Dendritic cell treated with granulocyte-macrophage colony-stimulating factor and Interleukin-4, amounts not matched to agents 40 ng/mL and 50 ng/mL, for 4 days (primary cell): ENCODE measurements at regions of chr2 and their contacts with region 1.

Region 1: GRCh38 chr2:84495539-84496146 is 20.7 kb upstream of the DNAH6 start:
- H3K4me3 Mint-ChIP-seq: no peak overlapping the region
- H3K27ac Mint-ChIP-seq: no peak overlapping the region
- H3K4me1 Mint-ChIP-seq: no peaks in the 10 kb centered on the region
- H3K27me3 Mint-ChIP-seq: peaks cover 3% of the 10 kb centered on the region

Region 2: DNA sequence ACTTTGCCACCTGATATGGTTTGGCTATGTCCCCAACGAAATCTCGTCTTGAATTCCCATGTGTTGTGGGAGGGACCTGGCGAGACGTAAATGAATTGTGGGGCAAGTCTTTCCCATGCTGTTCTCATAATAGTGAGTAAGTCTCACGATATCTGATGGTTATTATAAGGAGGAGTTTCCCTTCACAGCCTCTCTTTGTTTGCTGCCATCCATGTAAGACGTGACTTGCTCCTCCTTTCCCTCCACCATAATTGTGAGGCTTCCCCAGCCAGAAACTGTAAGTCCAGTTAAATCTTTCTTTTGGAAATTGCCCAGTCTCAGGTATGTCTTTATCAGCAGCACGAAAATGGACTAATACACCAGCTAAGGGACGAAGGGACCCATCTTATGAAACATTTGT is 1339.8 kb before region 1 on chr2:
- intact Hi-C with region 1: no loop called
- H3K4me3 Mint-ChIP-seq: no peak overlapping the region
- H3K27ac Mint-ChIP-seq: no peak overlapping the region
- H3K4me1 Mint-ChIP-seq: no peaks in the 10 kb centered on the region
- H3K27me3 Mint-ChIP-seq: no peaks in the 10 kb centered on the region

Region 3: GRCh38 chr2:84283506-84283905 is 212.1 kb before region 1 on chr2:
- intact Hi-C with region 1: no loop called
- H3K4me3 Mint-ChIP-seq: no peak overlapping the region
- H3K27ac Mint-ChIP-seq: no peak overlapping the region
- H3K4me1 Mint-ChIP-seq: no peaks in the 10 kb centered on the region
- H3K27me3 Mint-ChIP-seq: no peaks in the 10 kb centered on the region

Region 4: DNA sequence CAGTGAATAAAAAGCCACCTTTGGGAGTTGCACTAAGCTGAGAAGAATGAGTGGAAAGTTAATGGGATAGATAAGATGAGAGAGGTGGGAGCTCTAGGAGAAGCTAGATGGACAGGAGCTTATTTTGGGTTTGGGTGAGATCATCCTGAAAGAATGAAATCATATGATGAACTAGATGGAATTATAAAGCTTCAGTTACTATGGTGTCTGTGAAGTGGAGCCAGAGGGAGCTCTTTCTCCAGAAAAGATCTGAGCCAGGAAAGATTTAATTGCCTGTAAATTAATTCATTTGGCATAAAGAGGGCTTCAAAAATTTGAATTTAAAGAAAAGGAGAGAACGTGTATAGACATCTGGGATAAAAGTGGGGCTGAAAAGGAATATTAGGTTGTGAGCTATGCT is 30.9 kb after region 1 on chr2:
- intact Hi-C with region 1: no loop called
- H3K4me3 Mint-ChIP-seq: no peak overlapping the region
- H3K27ac Mint-ChIP-seq: no peak overlapping the region
- H3K4me1 Mint-ChIP-seq: no peaks in the 10 kb centered on the region
- H3K27me3 Mint-ChIP-seq: peaks cover 9% of the 10 kb centered on the region

Region 5: DNA sequence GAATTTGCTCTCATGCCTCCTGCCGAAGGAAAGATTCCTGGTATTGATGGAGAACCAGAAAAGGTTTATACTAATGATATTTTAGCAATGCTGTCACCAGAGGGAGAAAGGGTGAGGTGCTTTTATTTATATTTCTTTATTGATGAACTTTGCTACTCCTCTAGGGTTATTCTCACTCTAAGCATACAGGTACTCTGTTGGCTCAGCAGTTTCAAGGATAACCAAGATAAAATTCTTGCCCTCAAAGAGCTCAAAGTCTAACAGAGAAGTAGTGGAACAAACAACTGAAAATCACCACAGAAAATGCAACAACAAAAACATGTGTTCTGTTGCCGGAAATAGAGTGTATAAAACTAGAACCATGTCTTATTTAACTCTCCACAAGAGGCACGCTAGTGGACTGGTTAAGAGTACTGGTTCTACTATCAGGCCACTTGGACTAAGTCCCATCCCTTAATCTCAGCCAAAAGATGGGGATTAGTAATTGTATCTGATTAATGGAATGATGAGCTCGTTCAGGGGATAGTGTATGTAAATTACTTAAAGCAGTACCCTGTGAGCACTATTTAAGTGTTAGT is 124.2 kb after region 1 on chr2:
- intact Hi-C with region 1: loop called (anchors 10 kb)
- H3K4me3 Mint-ChIP-seq: no peak overlapping the region
- H3K27ac Mint-ChIP-seq: no peak overlapping the region
- H3K4me1 Mint-ChIP-seq: no peaks in the 10 kb centered on the region
- H3K27me3 Mint-ChIP-seq: peaks cover 3% of the 10 kb centered on the region

Region 6: DNA sequence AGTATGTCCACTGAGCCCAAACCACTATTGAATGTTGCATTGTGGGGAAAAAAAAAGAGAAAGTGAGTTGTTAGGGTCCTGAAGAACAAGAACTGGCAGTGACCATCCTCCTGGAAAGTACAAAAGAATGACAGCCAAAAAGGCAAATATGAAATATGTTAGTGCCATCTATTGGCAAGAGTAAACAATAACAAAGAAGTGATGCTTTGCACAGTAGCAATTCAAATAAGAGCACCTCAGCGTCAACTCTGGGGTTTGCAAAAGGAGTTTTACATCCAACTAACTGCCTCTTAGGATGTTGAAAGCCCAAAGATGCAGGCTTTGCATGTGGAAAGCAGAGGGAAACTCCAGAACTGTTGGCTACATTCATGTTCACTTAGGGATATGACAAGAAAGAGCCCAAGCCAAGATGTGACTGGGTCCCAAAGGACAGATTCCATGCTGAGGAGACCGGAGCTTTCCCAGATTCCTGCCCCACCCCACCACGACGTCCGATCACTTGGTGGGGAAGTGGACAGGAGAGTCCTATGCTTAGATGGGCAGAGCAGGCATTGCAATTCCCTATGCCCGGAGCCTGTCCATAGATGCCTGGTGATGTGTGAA is 369.6 kb after region 1 on chr2:
- intact Hi-C with region 1: loop called (anchors 1 kb)
- H3K4me3 Mint-ChIP-seq: no peak overlapping the region
- H3K27ac Mint-ChIP-seq: no peak overlapping the region
- H3K4me1 Mint-ChIP-seq: no peaks in the 10 kb centered on the region
- H3K27me3 Mint-ChIP-seq: peaks cover 6% of the 10 kb centered on the region

Region 7: DNA sequence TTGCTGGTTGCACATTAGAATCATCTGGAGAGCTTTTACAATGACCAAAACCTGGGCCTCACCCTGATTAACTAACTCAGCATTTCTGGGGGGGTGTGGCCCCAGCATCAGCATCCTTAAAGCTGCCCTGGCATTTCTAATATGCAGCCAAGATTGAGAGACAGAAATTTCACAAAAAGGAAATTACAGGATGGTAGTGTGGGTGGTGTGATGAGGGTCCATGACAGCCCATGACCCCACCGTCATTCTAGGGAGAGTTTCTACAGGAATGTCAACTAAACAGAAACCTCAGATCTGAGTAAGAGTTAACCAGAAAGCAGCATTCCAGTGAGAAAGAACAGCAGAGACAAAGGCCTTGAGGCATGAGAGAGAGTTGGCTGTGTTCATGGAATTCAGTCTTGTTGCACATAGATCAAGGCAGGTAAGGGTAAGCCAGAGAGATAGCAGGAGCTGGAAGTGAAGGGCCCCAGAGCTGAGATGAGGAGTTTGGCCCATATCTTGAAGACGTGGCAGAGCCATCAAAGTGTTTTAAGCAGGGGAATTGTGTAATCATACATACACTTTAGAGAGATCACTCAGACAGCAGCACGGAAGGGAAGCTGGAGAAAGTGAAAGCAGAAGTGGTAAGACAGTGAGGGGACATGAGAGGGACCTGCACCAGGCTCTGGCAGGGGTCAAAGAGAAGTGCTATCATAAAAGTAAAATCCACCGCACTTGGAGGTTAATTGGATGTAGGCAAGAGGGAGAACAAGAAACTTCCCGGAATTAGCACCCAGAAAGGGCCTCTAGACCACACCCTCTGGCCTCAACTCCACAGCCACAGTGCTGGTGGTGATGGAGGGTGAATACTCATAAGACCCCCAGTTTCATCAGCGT is 393.0 kb after region 1 on chr2:
- intact Hi-C with region 1: no loop called
- H3K4me3 Mint-ChIP-seq: peak overlapping the region; percentile 66
- H3K27ac Mint-ChIP-seq: peak overlapping the region; percentile 85
- H3K4me1 Mint-ChIP-seq: peaks cover 46% of the 10 kb centered on the region
- H3K27me3 Mint-ChIP-seq: peaks cover 6% of the 10 kb centered on the region